ENCODE measurements at regions of chr14 and their contacts with region 1.

Region 1: GRCh38 chr14:64914237-64914971 is at the start of gene CHURC1:
- DNase-seq: peak; percentile 84
- H3K4me3 ChIP-seq: peak within 1 kb of the TSS; percentile 98
- CTCF ChIP-seq: no peak

Region 2: DNA sequence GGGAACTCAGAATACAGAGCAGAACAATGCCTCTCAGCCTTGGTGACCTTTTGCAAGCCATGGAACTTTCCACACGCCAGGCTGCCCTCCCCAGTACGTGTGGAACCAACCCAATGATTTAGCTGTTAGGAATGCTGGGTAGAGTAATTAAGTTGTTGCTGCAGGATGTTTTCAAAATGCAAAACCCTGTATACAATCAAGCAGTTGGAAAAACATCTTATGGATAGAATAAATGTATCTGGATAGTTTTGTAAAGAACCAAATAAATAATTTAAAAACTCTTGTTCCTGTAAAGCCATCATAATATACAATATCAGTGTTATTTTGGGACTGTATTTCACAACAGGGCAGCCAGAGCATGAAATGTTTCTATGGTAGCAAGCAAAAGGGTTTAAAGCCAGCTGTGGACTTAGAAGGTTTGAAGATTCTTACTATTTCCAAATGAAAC is 345.2 kb before region 1 on chr14:
- CTCF ChIA-PET with region 1: no interaction called
- POLR2A ChIA-PET with region 1: no interaction called
- DNase-seq: no peak
- H3K4me3 ChIP-seq: no peak overlapping the region
- CTCF ChIP-seq: no peak

Region 3: GRCh38 chr14:64899958-64900357 is 14.4 kb before region 1 on chr14:
- CTCF ChIA-PET with region 1: interaction called, 22 read pairs
- POLR2A ChIA-PET with region 1: no interaction called
- DNase-seq: no peak
- H3K4me3 ChIP-seq: no peak overlapping the region
- CTCF ChIP-seq: no peak

Region 4: GRCh38 chr14:64928239-64929013 is 14.0 kb after region 1 on chr14:
- CTCF ChIA-PET with region 1: interaction called, 13 read pairs
- POLR2A ChIA-PET with region 1: interaction called, 4 read pairs
- DNase-seq: no peak
- H3K4me3 ChIP-seq: no peak overlapping the region
- CTCF ChIP-seq: no peak

Measured in AG04449 (cell line).